K562 (cell line): ENCODE measurements at regions of chr17 and their contacts with region 1.

Region 1: DNA sequence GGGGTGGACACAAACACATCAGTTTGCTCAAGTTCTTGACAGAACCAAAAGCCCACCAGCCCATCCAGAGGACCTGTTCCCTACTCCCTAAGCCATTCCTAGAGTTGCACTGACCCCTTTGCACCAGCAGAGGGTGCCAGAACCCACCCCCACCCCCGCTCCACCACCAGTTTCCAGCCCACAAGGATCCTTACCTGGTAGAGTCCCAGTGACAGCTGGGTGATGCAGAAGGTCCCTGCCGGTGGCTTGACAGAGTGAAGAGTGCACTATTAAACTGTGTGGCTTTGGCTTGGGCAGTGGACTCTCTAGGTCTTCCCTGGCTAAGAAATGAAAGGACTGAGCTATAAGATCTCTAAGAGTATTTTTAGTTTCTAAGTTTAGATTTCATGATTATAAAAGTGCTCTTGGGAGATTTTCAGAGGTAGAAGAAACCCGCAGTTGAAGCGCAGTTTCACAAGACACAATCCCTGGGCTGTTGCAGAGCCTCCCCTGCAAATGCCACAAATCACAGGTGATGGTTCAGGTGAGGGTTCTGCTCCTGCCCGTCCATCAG is 73.3 kb upstream of the MTMR4 start:
- DNase-seq: peak; percentile 73 to 90 (median 84)
- ATAC-seq: peak; percentile 94
- H3K4me3 ChIP-seq: no peak overlapping the region
- H3K27ac ChIP-seq: no peak overlapping the region
- H3K4me1 ChIP-seq: no peaks in the 10 kb centered on the region
- H3K27me3 ChIP-seq: peaks cover 5 to 11% of the 10 kb centered on the region in 2 experiments; a peak in 3 of 5 replicates
- CTCF ChIP-seq: peak; percentile 83 to 94 (median 87)
- EP300 ChIP-seq: no peak
- POLR2A ChIP-seq: no peak
- RAD21 ChIP-seq: peak; percentile 77 to 84

Region 2: DNA sequence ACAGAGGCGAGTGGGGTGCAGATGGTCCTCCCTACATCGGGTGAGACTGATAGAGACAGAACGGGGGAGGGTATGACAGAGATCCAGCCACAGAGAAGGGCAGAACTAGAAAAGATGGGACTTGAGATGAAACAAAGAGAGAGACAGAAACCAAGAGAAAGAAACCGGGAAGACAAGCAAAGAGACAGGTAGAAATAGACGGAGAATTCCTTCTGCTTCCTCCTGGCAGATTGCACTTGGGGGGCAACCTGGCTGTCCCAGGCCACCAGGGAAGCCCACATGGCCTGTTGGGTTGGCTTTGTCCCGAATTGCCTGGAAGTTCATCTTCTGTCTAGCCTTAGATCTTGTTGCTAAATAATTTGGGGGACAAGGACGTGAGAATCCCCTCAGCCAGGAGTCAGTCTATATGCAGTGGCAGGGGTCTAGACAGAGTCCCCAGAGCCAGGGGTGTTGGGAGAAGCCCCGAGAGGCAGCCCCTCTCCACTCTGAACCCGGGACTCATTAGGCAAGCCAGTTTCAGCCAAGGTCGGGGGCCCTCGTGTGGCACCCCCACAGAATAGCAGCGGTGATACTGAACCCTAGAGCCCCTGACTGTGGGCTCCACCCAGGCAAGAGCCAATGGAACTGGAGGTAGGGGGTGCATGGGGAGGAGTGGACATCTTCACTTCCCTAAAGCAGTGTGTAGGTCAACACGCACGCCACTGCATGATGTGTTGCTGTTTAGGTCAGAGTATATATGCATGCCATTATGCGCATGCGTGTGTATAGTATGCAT is 258.6 kb before region 1 on chr17:
- CTCF ChIA-PET with region 1: no interaction called
- POLR2A ChIA-PET with region 1: no interaction called
- in situ Hi-C with region 1: no loop called
- intact Hi-C with region 1: no loop called
- DNase-seq: peak; percentile 59 to 95 (median 74)
- ATAC-seq: peak; percentile 67
- H3K4me3 ChIP-seq: peak overlapping the region; percentile 91
- H3K27ac ChIP-seq: peak overlapping the region; percentile 99
- H3K4me1 ChIP-seq: peaks cover 25 to 56% of the 10 kb centered on the region in 2 experiments
- H3K27me3 ChIP-seq: no peaks in the 10 kb centered on the region
- CTCF ChIP-seq: peak; percentile 67 to 82 (median 72)
- EP300 ChIP-seq: no peak
- POLR2A ChIP-seq: peak; percentile 76
- RAD21 ChIP-seq: peak; percentile 48 to 56

Region 3: DNA sequence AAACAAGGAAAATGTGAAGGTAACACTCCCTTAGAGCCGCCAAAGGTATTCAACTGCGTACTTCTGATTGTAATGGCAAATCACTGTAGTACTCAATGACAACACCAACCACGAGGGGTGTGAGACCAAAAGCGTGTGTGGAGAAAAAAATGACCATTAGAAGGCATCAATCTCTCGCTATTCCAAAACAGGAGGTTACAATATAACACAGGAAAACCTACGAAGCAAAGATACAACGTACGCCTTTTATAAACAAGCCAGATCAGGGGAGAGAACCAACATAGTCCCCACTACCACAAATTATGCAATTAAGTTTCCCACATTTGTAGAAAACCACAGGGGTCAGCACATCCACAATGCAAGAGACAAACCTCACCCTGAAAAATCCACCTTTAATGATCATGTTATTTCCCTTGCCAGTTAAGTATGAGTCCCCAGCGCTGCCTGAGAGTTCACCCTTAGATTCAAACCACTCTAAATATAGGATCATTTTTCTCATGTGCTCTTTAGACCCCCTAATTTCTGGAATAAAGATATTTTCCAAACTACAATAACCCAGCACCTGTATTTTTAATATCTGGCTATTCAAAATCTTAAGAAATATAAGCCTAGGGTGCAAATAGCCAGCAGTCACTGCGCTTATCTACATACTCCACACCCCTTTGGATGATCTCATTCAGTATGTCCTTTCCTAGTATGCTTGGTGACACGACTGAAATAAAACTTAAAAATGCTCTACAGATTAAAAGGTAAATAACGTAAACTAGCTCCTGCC is 91.7 kb after region 1 on chr17:
- CTCF ChIA-PET with region 1: no interaction called
- POLR2A ChIA-PET with region 1: interaction called, 3 read pairs
- in situ Hi-C with region 1: no loop called
- intact Hi-C with region 1: loop called (anchors 10 kb)
- DNase-seq: peak; percentile 62 to 93 (median 75)
- ATAC-seq: peak; percentile 96
- H3K4me3 ChIP-seq: no peak overlapping the region
- H3K27ac ChIP-seq: peak overlapping the region; percentile 92
- H3K4me1 ChIP-seq: peaks cover 0 to 3% of the 10 kb centered on the region in 2 experiments; a peak in 2 of 5 replicates
- H3K27me3 ChIP-seq: no peaks in the 10 kb centered on the region
- CTCF ChIP-seq: peak; percentile 14 to 33 (median 30); a peak in 2 of 6 replicates
- EP300 ChIP-seq: peak; percentile 84
- POLR2A ChIP-seq: peak; percentile 100
- RAD21 ChIP-seq: peak; percentile 28 to 81; a peak in 3 of 4 replicates

Region 4: DNA sequence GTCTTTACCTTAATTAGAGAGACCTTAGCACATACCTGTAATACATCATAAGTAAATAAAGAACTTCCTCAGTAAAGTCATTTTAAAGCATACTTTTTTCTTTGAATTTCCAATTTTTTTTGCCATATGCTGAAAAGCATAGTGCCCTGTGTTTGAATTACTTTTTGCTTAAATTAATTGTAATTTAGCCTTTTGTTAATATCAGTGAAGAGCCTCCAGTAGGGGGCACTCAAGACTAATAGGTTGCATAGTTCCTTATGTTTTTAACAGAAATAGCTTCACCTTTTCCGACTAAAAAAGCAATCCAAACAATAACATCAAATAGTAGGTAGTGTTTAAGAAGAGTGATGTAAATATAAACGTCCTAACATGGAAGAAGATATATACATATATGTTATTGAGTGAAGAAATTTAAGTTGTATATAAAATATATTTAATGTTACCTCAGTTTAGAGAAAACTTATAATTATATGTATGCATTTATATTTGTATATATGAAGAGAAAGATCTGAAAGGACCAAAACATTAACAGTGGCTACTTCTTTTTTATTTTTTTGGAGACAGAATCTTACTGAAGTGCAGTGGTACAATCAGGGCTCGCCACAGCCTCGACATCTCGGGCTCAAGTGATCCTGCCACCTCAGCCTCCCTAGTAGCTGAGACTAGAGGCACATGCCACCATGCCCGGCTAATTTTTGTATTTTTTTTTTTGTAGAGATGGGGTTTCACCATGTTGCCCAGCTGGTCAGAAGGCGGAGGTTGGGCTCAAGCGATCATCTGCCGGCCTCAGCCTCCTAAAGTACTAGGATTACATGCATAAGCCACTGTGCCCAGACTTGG is 123.4 kb after region 1 on chr17:
- CTCF ChIA-PET with region 1: no interaction called
- POLR2A ChIA-PET with region 1: no interaction called
- in situ Hi-C with region 1: no loop called
- intact Hi-C with region 1: loop called (anchors 5 kb)
- DNase-seq: peak; percentile 21 to 73 (median 23)
- ATAC-seq: peak; percentile 68
- H3K4me3 ChIP-seq: no peak overlapping the region
- H3K27ac ChIP-seq: no peak overlapping the region
- H3K4me1 ChIP-seq: peaks cover 2 to 7% of the 10 kb centered on the region in 2 experiments; a peak in 3 of 5 replicates
- H3K27me3 ChIP-seq: no peaks in the 10 kb centered on the region
- CTCF ChIP-seq: peak in 2 of 3 experiments; percentile 57 to 85; a peak in 4 of 6 replicates
- EP300 ChIP-seq: no peak
- POLR2A ChIP-seq: no peak
- RAD21 ChIP-seq: peak; percentile 87 to 94

Region 5: DNA sequence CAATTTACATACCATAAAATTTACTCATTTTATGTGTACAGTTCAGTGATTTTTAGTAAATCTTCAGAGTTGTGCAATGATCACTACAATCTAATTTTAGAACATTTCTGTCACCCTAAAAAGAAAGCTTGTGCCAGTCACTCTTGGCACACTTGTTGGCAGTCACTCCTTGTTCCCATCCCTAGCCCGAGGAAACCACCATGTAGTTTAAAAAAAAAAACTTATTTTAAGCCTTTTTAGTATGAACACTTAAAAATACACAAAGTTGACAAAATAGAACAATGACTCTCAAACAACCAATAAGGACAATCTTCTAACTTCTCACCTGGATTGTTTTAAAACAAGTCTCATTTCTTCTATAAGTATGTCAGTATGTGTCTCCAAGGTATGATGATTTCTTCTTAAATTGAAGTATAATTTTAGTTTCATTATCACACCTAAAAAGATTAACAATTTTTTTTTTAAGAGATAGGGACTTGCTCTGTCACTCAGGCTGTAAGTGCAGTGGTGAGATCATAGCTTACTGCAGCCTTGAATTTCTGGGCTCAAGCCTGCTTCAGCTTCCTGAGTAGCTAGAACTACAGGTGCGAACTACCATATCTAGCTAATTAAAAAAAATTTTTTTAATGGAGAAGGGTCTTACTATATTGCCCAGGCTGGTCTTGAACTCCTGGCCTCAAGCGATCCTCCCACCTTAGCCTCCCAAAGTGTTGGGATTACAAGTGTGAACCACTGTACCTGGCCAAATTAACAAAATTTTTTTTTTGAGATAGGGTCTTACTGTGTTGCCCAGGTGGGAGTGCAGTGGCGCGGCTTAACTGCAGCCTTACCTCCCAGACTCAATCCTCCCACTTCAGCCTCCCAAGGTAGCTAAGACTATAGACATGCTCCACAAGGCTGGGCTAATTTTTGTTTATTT is 221.1 kb after region 1 on chr17:
- CTCF ChIA-PET with region 1: no interaction called
- POLR2A ChIA-PET with region 1: no interaction called
- in situ Hi-C with region 1: no loop called
- intact Hi-C with region 1: no loop called
- DNase-seq: no peak
- ATAC-seq: no peak
- H3K4me3 ChIP-seq: no peak overlapping the region
- H3K27ac ChIP-seq: no peak overlapping the region
- H3K4me1 ChIP-seq: no peaks in the 10 kb centered on the region
- H3K27me3 ChIP-seq: no peaks in the 10 kb centered on the region
- CTCF ChIP-seq: no peak
- EP300 ChIP-seq: no peak
- POLR2A ChIP-seq: no peak
- RAD21 ChIP-seq: no peak

Region 6: GRCh38 chr17:58875261-58875660 is 287.5 kb after region 1 on chr17:
- CTCF ChIA-PET with region 1: no interaction called
- POLR2A ChIA-PET with region 1: no interaction called
- in situ Hi-C with region 1: no loop called
- intact Hi-C with region 1: no loop called
- DNase-seq: no peak
- ATAC-seq: no peak
- H3K4me3 ChIP-seq: no peak overlapping the region
- H3K27ac ChIP-seq: no peak overlapping the region
- H3K4me1 ChIP-seq: no peaks in the 10 kb centered on the region
- H3K27me3 ChIP-seq: no peaks in the 10 kb centered on the region
- CTCF ChIP-seq: no peak
- EP300 ChIP-seq: no peak
- POLR2A ChIP-seq: no peak
- RAD21 ChIP-seq: no peak

Region 7: GRCh38 chr17:59004338-59005111 is 416.7 kb after region 1 on chr17:
- CTCF ChIA-PET with region 1: interaction called, 20 read pairs
- POLR2A ChIA-PET with region 1: no interaction called
- in situ Hi-C with region 1: loop called (anchors 10 kb)
- intact Hi-C with region 1: loop called (anchors 1 kb)
- DNase-seq: peak; percentile 52 to 78 (median 60)
- ATAC-seq: peak; percentile 90
- H3K4me3 ChIP-seq: no peak overlapping the region
- H3K27ac ChIP-seq: peak overlapping the region; percentile 24; the same call in 1 of the 3 replicates
- H3K4me1 ChIP-seq: peaks cover 0 to 2% of the 10 kb centered on the region in 2 experiments; a peak in 1 of 5 replicates
- H3K27me3 ChIP-seq: no peaks in the 10 kb centered on the region
- CTCF ChIP-seq: peak; percentile 75 to 89 (median 83)
- EP300 ChIP-seq: no peak
- POLR2A ChIP-seq: no peak
- RAD21 ChIP-seq: peak; percentile 95 to 97